B cell (primary cell): ENCODE measurements at regions of chr1 and their contacts with region 1.

Region 1: DNA sequence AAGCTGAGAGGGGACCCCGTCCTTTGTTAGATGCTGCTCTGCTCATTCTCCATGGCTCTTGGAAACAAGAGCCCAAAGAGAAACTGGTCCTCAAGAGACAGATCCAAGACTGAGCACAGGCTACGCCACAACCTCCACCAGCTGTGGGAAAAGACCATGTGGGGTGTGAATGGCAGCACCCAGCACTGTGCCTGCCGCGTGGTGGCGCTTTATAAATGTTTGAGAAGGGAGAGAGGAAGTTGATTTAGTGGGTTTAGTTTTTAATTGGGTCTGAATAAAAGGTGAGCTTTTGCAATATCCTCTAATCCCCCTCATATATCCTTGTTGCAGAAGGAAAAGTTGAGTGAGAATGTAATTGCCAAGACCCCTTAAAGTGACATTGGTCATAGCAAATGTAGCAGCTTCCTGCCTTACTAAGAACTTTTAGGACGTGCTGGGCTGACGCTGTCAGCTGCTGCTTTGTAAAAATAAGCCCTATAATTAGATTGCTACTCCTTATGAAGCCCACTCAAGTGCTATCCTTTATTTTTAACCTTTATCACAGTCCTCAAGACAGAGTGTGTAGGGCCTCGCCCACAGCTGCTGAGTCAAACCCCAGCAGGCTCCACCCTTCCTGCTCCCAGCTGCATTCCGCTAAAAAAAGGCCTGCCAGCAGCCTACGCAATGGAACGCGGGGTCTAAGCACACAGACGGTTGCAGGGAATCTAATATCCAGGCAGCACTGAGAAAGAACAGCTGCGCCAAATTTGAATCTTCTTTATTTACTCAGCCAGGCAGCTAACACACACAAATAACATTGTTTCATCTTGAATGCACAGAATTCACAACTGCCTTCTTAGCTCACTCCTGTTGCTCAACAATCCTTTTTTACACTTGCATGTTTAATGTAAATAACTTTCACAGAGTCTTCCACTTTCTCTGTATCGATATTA is 47.4 kb upstream of the PRDX6 start:
- DNase-seq: peak; percentile 82
- ATAC-seq: peak; percentile 89
- H3K4me3 ChIP-seq: peak overlapping the region; percentile 20 to 50 (median 31)
- H3K4me3 Mint-ChIP-seq: peak overlapping the region; percentile 74
- H3K27ac ChIP-seq: peak overlapping the region; percentile 43 to 63
- H3K27ac Mint-ChIP-seq: peak overlapping the region; percentile 84
- H3K4me1 ChIP-seq: peaks cover 20 to 23% of the 10 kb centered on the region in 2 donors
- H3K4me1 Mint-ChIP-seq: peaks cover 24% of the 10 kb centered on the region
- H3K27me3 ChIP-seq: no peaks in the 10 kb centered on the region
- H3K27me3 Mint-ChIP-seq: no peaks in the 10 kb centered on the region
- CTCF ChIP-seq: peak; percentile 78

Region 2: GRCh38 chr1:173409613-173410012 is 20.1 kb before region 1 on chr1:
- CTCF ChIA-PET with region 1: interaction called, 24 read pairs
- POLR2A ChIA-PET with region 1: interaction called, 3 read pairs
- intact Hi-C with region 1: no loop called
- DNase-seq: peak; percentile 73
- ATAC-seq: peak; percentile 22
- H3K4me3 ChIP-seq: no peak overlapping the region
- H3K4me3 Mint-ChIP-seq: peak overlapping the region; percentile 64
- H3K27ac ChIP-seq: peak overlapping the region; percentile 89 to 97
- H3K27ac Mint-ChIP-seq: peak overlapping the region; percentile 87
- H3K4me1 ChIP-seq: peaks cover 76 to 88% of the 10 kb centered on the region in 2 donors
- H3K4me1 Mint-ChIP-seq: peaks cover 79% of the 10 kb centered on the region
- H3K27me3 ChIP-seq: no peaks in the 10 kb centered on the region
- H3K27me3 Mint-ChIP-seq: no peaks in the 10 kb centered on the region
- CTCF ChIP-seq: no peak

Region 3: GRCh38 chr1:173714759-173715537 is 285.2 kb after region 1 on chr1 and contains the start of gene KLHL20:
- CTCF ChIA-PET with region 1: interaction called, 19 read pairs
- POLR2A ChIA-PET with region 1: no interaction called
- intact Hi-C with region 1: loop called (anchors 5 kb)
- DNase-seq: peak; percentile 90
- ATAC-seq: peak; percentile 93
- H3K4me3 ChIP-seq: peak within 1 kb of the TSS; percentile 76 to 92 (median 84)
- H3K4me3 Mint-ChIP-seq: peak within 1 kb of the TSS; percentile 98
- H3K27ac ChIP-seq: peak within 1 kb of the TSS; percentile 75 to 84
- H3K27ac Mint-ChIP-seq: peak within 1 kb of the TSS; percentile 96
- H3K4me1 ChIP-seq: peaks cover 10 to 15% of the 10 kb centered on the region in 2 donors
- H3K4me1 Mint-ChIP-seq: peaks cover 23% of the 10 kb centered on the region
- H3K27me3 ChIP-seq: peaks cover 0 to 9% (median 2%) of the 10 kb centered on the region in 4 experiments
- H3K27me3 Mint-ChIP-seq: peaks cover 26% of the 10 kb centered on the region
- CTCF ChIP-seq: no peak
- total RNA-seq, gene KLHL20: 32.2 and 35.4 TPM in 2 replicates

Region 4: DNA sequence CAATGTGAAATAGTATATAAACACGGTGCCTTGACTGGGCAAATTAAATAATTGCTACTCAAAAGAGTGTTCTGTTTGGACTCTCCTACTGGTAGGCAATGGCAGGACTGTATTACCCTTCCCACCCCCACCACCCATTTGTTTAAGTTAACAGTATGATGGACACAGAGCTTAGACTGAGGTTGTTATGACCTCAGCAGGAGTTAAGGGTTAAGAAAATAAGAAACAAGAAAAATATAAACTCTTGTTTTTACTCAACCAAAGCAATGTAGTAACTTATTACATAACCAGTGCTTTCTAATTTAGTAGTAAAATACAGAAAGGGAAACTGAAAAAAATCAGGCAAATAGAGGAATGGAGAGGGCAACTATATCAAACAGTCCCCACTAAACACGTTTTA is 507.3 kb after region 1 on chr1:
- CTCF ChIA-PET with region 1: interaction called, 3 read pairs
- POLR2A ChIA-PET with region 1: no interaction called
- intact Hi-C with region 1: loop called (anchors 10 kb)
- DNase-seq: no peak
- ATAC-seq: no peak
- H3K4me3 ChIP-seq: no peak overlapping the region
- H3K4me3 Mint-ChIP-seq: no peak overlapping the region
- H3K27ac ChIP-seq: no peak overlapping the region
- H3K27ac Mint-ChIP-seq: no peak overlapping the region
- H3K4me1 ChIP-seq: no peaks in the 10 kb centered on the region
- H3K4me1 Mint-ChIP-seq: no peaks in the 10 kb centered on the region
- H3K27me3 ChIP-seq: no peaks in the 10 kb centered on the region
- H3K27me3 Mint-ChIP-seq: no peaks in the 10 kb centered on the region
- CTCF ChIP-seq: no peak

Region 5: DNA sequence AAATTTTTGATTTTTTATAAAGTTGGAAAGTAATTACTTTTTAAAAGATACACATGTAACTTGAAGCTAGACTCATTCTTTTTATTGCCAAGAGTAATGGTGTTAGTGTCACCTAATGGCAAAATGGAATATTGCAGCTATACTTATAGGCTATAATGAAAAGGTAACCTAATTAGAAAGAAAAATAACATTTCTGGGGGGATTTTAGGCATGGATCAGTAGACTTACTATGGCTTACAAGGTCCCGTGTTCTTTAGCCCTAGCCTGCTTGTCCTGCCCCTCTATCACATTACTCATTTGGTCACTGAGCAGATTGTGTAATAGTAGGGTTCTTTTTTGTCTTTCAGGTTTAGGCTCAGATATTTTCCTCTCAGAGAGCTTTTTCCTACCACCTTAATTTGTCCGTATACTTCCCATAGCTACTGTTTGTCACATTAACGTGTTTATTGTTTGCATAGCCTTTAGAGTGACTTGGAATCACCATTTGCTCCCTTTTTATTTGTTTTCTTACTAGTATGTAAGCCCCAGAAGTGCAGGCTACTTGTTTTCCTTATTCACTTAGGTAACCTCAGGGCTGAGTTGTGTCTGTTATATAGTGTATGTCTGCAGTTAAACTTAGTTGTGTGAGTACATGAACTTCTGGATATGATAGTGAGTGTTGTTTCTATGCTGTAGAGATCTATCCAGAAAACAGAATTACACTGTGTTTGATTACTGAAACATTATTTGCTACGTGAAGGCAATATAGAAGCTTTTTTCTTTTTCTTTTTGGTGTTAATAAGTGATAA is 788.2 kb after region 1 on chr1:
- CTCF ChIA-PET with region 1: interaction called, 6 read pairs
- POLR2A ChIA-PET with region 1: no interaction called
- intact Hi-C with region 1: loop called (anchors 1 kb)
- DNase-seq: peak; percentile 71
- ATAC-seq: peak; percentile 71
- H3K4me3 ChIP-seq: no peak overlapping the region
- H3K4me3 Mint-ChIP-seq: no peak overlapping the region
- H3K27ac ChIP-seq: peak overlapping the region; percentile 48 to 67
- H3K27ac Mint-ChIP-seq: no peak overlapping the region
- H3K4me1 ChIP-seq: peaks cover 37 to 39% of the 10 kb centered on the region in 2 donors
- H3K4me1 Mint-ChIP-seq: peaks cover 40% of the 10 kb centered on the region
- H3K27me3 ChIP-seq: no peaks in the 10 kb centered on the region
- H3K27me3 Mint-ChIP-seq: no peaks in the 10 kb centered on the region
- CTCF ChIP-seq: peak; percentile 93